SK-N-SH (cell line): ENCODE measurements at regions of chr5 and their contacts with region 1.

Region 1: GRCh38 chr5:142860270-142860669 is 90.1 kb downstream of the ARHGAP26 start:
- DNase-seq: no peak
- H3K4me3 ChIP-seq: no peak overlapping the region
- H3K27ac ChIP-seq: peak overlapping the region in 1 of 2 experiments; percentile 39; a peak in 2 of 4 replicates
- H3K4me1 ChIP-seq: peaks cover 10 to 53% of the 10 kb centered on the region in 2 experiments; a peak in 2 of 4 replicates
- H3K27me3 ChIP-seq: no peaks in the 10 kb centered on the region
- CTCF ChIP-seq: no peak
- EP300 ChIP-seq: no peak
- RAD21 ChIP-seq: no peak

Region 2: DNA sequence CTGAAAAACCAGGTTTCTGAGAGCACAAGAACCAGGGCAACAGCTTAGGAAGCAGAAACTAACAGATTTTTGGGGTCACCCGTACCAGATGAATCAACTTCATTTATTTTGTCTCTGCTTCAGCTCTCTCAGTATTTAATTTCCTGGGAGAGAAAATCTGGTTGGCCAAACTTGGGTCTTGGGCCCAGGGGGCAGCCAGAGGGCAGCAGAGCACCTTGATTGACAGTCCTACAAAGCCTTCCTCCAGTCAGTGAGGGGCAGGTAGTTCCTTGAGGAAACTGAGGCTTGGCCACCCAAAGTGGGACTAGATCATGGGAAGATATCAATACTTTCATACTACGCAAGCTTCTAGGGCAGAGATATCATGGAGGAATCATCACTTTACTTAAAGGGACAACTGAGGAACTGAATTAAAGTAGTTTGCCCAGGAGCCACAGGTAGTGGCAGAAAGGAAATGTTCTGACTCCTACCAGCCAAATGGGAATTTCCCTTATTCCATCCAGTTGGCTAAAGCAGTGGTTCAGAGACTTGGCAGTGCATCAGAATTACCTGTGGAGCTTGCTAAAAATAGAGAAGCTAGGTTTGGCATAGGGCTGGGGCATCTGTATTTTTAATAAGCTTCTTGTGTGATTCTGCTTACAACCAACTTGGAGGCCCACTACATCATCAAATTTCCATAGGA is 111.6 kb before region 1 on chr5:
- CTCF ChIA-PET with region 1: interaction called, 17 read pairs
- POLR2A ChIA-PET with region 1: no interaction called
- DNase-seq: peak; percentile 16
- H3K4me3 ChIP-seq: no peak overlapping the region; a peak in 1 of 4 replicates
- H3K27ac ChIP-seq: peak overlapping the region in 1 of 2 experiments; percentile 70; a peak in 2 of 4 replicates
- H3K4me1 ChIP-seq: peaks cover 11 to 26% of the 10 kb centered on the region in 2 experiments
- H3K27me3 ChIP-seq: no peaks in the 10 kb centered on the region
- CTCF ChIP-seq: peak; percentile 49
- EP300 ChIP-seq: no peak
- RAD21 ChIP-seq: peak; percentile 80

Region 3: GRCh38 chr5:142798099-142798770 is 62.0 kb before region 1 on chr5:
- CTCF ChIA-PET with region 1: no interaction called
- POLR2A ChIA-PET with region 1: no interaction called
- DNase-seq: no peak
- H3K4me3 ChIP-seq: no peak overlapping the region
- H3K27ac ChIP-seq: no peak overlapping the region
- H3K4me1 ChIP-seq: peaks cover 0 to 17% of the 10 kb centered on the region in 2 experiments; a peak in 1 of 4 replicates
- H3K27me3 ChIP-seq: no peaks in the 10 kb centered on the region
- CTCF ChIP-seq: no peak
- EP300 ChIP-seq: no peak
- RAD21 ChIP-seq: no peak

Region 4: DNA sequence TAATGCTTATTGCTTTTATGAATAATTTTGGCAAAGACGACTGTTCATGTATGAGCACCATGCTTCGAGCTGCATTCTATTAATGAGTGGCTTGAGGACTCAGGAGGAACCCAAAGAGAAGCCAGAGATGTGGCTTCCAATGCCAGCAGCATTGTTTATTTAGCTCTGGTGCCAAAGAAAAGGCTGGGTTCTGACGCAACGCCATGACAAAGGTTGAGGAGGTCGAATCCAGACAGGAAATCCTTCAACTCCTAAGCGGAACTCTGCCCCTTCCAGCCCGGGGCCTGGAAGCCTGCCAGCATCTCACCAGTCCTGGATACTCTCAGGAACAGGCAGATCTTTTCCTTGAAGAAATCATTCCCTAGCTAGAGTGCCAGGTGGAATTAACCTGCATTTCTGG is 14.3 kb after region 1 on chr5:
- CTCF ChIA-PET with region 1: interaction called, 12 read pairs
- POLR2A ChIA-PET with region 1: no interaction called
- DNase-seq: no peak
- H3K4me3 ChIP-seq: no peak overlapping the region
- H3K27ac ChIP-seq: peak overlapping the region; percentile 29 to 36; a peak in 2 of 4 replicates
- H3K4me1 ChIP-seq: peaks cover 50 to 57% of the 10 kb centered on the region in 2 experiments
- H3K27me3 ChIP-seq: no peaks in the 10 kb centered on the region
- CTCF ChIP-seq: no peak
- EP300 ChIP-seq: no peak
- RAD21 ChIP-seq: no peak